ENCODE measurements at regions of chr2 and their contacts with region 1.

Region 1: GRCh38 chr2:61538200-61538919 is at the start of gene XPO1:
- DNase-seq: peak; percentile 100
- ATAC-seq: peak; percentile 96
- total RNA-seq, gene XPO1: 66.4 TPM

Region 2: GRCh38 chr2:61434314-61434713 is 104.0 kb before region 1 on chr2:
- intact Hi-C with region 1: no loop called
- DNase-seq: peak; percentile 71
- ATAC-seq: no peak

Region 3: DNA sequence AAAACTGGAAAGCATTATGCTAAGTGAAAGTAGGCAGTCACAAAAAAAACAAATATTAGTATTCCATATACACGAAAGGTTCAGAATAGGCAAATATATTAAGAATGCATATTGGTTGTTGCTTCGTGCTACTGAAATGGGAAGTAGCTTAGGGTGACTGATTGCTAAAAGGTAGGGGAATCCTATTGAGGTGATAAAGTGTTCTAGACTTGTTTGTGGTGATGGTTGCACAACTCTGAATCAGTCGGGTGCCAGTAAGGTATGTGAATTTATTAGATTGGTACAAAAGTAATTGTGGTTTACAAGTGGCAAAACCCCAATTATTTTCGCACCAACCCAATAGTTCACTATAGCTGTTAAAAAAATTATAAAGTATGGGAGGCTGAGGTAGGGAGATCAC is 88.2 kb before region 1 on chr2:
- intact Hi-C with region 1: no loop called
- DNase-seq: no peak
- ATAC-seq: no peak

Region 4: GRCh38 chr2:61470965-61471904 is 67.1 kb before region 1 on chr2 and contains the start of gene USP34:
- intact Hi-C with region 1: loop called (anchors 1 kb)
- DNase-seq: peak; percentile 98
- ATAC-seq: peak; percentile 98
- total RNA-seq, gene USP34: 45.7 TPM

Region 5: GRCh38 chr2:61604433-61604832 is 66.1 kb after region 1 on chr2:
- intact Hi-C with region 1: no loop called
- DNase-seq: no peak
- ATAC-seq: no peak

Region 6: DNA sequence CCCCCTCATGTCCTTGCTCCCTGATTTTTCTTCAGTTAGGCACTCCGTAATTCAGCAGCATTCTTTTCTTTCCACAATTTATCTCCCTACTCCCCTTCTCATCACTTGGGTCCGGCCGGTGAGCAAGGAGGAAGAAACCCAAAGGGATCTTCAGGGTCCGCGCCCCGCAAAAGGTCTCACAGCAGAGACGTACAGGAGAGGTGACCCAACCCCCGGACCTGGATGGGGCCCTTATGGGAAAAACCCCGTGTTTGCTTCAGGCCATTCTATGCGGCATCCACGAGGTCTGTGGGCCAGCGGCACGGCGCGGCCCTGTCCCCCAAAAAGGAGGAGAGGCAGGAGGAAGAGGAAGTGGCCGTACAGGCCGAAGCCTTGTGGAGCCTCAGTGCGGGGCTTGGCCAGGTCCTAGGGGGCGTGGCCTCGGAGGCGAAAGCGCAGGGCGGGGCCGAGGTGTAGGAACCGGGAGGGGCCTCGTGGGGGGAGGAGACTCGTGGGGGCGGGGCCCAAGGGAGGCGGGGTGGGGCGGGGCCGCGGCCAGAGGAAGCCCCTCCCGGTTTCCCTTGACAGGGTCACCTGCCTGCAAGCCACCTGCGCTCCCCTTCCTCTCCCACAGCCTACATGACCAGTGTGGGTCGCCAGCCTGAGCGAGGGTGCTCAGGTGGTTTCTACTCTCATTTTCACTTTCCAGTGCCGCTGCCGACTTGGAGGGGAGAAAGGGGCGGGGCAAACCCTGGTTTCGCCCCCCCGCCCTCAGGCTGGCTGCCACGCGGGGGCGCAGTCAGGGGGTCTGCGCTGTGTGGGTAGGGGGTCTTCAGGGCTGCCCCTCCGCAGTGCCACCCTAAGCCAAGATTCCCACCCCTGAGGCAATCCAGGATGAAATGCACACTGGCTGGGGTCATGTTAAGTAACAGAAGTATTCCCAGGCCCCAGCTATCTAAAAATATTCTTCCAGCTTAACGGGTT is 156.2 kb after region 1 on chr2:
- intact Hi-C with region 1: loop called (anchors 10 kb)
- DNase-seq: peak; percentile 98
- ATAC-seq: peak; percentile 100

Region 7: GRCh38 chr2:61764035-61764800 is 225.9 kb after region 1 on chr2:
- intact Hi-C with region 1: loop called (anchors 1 kb)
- DNase-seq: peak; percentile 98
- ATAC-seq: peak; percentile 100

Region 8: DNA sequence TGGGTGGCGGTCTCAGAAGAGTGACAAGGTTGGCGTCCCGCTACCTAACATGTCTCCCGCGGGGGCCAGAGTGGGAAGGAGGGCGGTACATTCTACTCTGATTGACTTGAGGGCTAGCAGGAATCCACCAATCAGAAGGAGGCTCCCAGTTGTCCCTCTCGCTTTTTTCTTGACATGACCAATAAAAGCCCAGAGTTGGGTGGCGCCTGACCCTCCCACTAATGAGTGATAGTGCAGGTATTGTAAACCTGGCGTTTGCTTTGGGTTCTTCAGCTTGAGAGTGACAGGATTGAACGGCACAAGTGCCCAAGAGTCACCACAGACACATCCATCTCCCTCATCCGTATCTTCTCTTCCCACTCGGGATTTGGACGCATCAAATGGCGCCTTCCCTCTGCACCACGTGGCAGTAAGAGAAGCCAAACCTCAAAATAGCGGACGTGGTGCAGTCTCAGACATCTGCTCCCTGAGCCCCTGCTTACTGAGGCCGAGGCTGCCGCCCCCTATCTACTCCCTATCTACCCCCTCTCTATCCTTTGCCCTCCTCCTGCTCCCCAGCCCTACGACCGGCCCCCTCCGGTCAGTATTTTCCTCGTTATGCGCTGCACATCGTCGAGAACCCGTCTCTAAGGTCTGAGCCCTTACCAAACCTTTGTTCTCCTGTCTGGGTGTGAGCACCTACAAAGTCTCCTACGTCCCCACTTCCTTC is 316.3 kb after region 1 on chr2:
- intact Hi-C with region 1: loop called (anchors 5 kb)
- DNase-seq: peak; percentile 91
- ATAC-seq: peak; percentile 94

Measured in Right ventricle myocardium inferior (tissue), 1 donor.